K562 (cell line): ENCODE measurements at regions of chr7 and their contacts with region 1.

Region 1: DNA sequence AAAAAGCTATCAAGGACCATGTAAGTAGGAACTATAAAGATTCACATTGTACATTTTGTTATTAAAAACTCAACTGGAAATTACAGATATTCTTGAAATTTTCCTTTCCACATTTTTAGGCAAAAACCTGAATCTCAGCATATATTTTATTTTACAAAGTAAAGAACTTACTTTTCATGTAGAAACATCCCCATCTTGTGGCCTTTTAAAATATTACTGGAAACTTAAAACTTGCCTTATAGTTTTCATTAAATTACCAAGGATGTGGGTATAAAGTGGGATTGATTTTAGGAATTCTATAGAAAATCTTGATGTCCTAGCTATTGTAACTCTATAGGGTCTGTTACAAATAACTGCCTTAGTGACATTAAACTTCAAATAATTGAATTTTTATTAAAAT is 10.6 kb downstream of the DBF4 start:
- DNase-seq: no peak
- ATAC-seq: 0 out of 3 replicates have a peak, but pooled peaks have one; percentile 33
- H3K4me3 ChIP-seq: no peak overlapping the region
- H3K27ac ChIP-seq: no peak overlapping the region
- H3K4me1 ChIP-seq: no peaks in the 10 kb centered on the region
- H3K27me3 ChIP-seq: no peaks in the 10 kb centered on the region
- CTCF ChIP-seq: peak in 2 of 3 experiments; percentile 20 to 50; a peak in 2 of 6 replicates
- EP300 ChIP-seq: no peak
- POLR2A ChIP-seq: no peak
- RAD21 ChIP-seq: peak; percentile 51 to 56

Region 2: DNA sequence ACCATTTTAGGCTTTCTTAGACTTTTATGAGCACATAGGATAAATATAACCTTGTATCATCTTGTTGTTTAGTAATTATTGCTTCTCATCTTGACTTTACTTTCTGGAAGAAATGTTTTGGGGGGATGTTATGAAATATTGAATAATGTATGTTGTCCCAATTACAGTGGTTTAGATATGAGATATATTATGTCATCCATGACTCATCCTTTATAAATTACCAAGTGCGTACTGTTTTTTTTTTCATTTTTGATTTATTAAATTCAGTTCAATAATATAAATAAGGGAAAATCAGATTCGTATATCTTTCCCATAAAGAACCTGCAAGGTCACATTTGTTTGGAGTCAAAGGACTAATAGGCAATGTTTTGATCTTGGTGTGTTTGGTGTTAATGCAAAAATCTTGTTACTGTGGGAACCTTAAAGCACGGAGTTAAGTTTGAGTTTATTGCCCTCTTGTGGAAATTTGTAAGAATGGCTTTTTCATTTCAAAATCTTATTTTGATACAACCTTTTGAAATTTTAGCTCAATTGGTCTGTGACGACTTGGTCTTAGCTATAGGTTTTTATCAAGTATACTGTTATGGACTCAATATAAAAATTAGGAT is 224.4 kb after region 1 on chr7:
- CTCF ChIA-PET with region 1: no interaction called
- POLR2A ChIA-PET with region 1: no interaction called
- in situ Hi-C with region 1: no loop called
- intact Hi-C with region 1: loop called (anchors 1 kb)
- DNase-seq: peak; percentile 25 to 39 (median 31)
- ATAC-seq: peak; percentile 73
- H3K4me3 ChIP-seq: no peak overlapping the region
- H3K27ac ChIP-seq: no peak overlapping the region
- H3K4me1 ChIP-seq: no peaks in the 10 kb centered on the region
- H3K27me3 ChIP-seq: no peaks in the 10 kb centered on the region
- CTCF ChIP-seq: peak; percentile 30 to 75 (median 48); a peak in 3 of 6 replicates
- EP300 ChIP-seq: no peak
- POLR2A ChIP-seq: no peak
- RAD21 ChIP-seq: peak; percentile 78 to 84